MCF 10A (cell line): ENCODE measurements at regions of chr5 and their contacts with region 1.

Region 1: GRCh38 chr5:7261049-7261448 is 134.9 kb upstream of the ADCY2 start:
- DNase-seq: peak; percentile 25
- H3K4me3 Mint-ChIP-seq: no peak overlapping the region
- H3K27ac Mint-ChIP-seq: no peak overlapping the region
- H3K4me1 Mint-ChIP-seq: no peaks in the 10 kb centered on the region
- H3K27me3 Mint-ChIP-seq: peaks cover 2% of the 10 kb centered on the region
- CTCF ChIP-seq: peak; percentile 45

Region 2: GRCh38 chr5:6765612-6766525 is 495.2 kb before region 1 on chr5:
- CTCF ChIA-PET with region 1: interaction called, 3 read pairs
- POLR2A ChIA-PET with region 1: no interaction called
- intact Hi-C with region 1: loop called (anchors 5 kb)
- DNase-seq: peak; percentile 89
- H3K4me3 Mint-ChIP-seq: peak overlapping the region; percentile 65
- H3K27ac Mint-ChIP-seq: no peak overlapping the region
- H3K4me1 Mint-ChIP-seq: peaks cover 23% of the 10 kb centered on the region
- H3K27me3 Mint-ChIP-seq: no peaks in the 10 kb centered on the region
- CTCF ChIP-seq: peak; percentile 91